ENCODE measurements at regions of chr6 and their contacts with region 1.

Region 1: DNA sequence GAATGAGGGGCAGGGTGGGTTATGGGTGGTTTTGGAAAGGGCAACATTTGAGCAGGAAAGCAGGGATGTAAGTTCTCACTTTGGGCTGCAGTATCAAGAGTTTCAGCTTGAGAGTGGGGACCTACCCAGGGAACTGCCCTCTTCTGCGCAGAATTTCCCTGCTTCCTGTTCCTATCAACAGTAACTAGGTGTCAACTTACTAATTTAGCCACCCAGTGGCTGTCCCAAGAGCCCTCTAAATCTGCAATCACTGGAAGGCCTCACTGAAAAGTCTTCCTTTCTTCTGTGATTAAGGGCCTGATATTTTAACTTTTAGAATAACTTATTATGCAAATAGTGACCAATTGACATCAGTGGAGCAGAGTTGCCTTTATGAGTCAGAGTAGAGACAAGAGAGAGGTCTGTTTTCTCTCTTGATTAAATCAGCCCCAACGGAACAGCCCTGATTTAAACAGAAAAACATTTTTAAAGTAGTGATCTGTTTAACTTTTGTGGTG is 118.2 kb upstream of the RIPOR2 start:
- DNase-seq: peak; percentile 44
- ATAC-seq: peak; percentile 41
- H3K4me3 Mint-ChIP-seq: no peak overlapping the region
- H3K27ac Mint-ChIP-seq: peak overlapping the region; percentile 66
- H3K4me1 Mint-ChIP-seq: peaks cover 77% of the 10 kb centered on the region
- H3K27me3 Mint-ChIP-seq: no peaks in the 10 kb centered on the region
- CTCF ChIP-seq: no peak

Region 2: DNA sequence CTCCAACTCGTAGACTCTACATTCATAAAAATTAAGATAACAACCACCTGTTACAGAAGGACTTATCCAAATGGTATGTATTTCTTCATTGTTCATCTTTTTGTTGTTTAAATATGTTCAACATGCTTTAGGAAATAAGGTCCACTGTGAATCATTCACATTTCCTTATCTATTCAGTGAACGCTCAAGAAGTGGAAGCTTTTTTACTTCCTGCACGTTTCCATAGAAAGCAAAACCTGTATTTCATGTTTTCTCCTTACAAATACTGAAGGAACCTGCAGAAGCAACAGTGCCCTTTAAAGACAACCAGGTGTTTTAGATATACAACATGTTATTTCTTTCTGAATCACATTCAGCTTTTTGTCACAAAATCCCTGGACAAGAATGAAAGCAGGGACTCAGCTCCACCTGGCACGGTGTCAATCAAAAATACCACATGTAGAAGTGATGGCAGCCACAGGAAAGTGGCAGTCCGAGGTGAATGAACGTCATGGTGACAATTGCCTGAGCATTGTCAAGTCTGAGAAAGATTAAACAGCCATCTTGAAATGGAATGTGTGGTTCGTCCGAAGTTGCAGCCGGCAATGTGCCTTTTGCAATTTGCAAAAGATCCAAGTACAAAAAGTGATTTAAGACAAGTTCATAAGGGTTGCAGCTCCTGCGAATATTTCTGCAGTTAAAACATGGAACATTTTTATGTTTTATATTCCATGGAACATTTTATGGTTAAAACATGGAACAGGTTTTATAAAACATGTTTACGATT is 51.4 kb before region 1 on chr6:
- CTCF ChIA-PET with region 1: no interaction called
- POLR2A ChIA-PET with region 1: no interaction called
- intact Hi-C with region 1: no loop called
- DNase-seq: no peak
- ATAC-seq: no peak
- H3K4me3 Mint-ChIP-seq: no peak overlapping the region
- H3K27ac Mint-ChIP-seq: no peak overlapping the region
- H3K4me1 Mint-ChIP-seq: peaks cover 66% of the 10 kb centered on the region
- H3K27me3 Mint-ChIP-seq: no peaks in the 10 kb centered on the region
- CTCF ChIP-seq: no peak

Region 3: DNA sequence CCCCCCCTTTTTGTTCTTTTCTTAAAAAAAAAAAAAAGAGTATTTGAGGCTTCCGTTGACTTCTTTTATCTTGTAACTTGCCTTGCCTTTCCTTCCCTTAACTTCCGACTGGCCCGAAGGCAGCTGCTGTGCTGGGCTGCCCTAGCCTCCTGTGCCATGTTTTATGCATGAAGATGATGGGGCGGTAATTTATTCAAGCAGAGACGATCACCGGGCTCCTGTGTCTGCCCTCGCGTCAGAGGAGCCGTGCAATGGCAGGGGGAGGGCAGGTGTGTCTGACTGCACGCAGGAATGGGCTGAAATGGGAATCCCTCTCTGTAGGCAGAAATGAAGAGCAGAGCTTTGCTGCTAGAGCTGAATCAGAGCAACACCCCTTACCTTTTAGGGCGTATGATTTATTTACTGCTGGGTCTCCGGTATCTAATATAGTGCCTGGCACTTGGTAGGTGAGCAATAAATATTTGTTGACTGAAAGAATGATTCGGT is 11.8 kb before region 1 on chr6:
- CTCF ChIA-PET with region 1: interaction called, 10 read pairs
- POLR2A ChIA-PET with region 1: interaction called, 7 read pairs
- intact Hi-C with region 1: no loop called
- DNase-seq: peak; percentile 64
- ATAC-seq: peak; percentile 64
- H3K4me3 Mint-ChIP-seq: peak overlapping the region; percentile 83
- H3K27ac Mint-ChIP-seq: peak overlapping the region; percentile 92
- H3K4me1 Mint-ChIP-seq: peaks cover 52% of the 10 kb centered on the region
- H3K27me3 Mint-ChIP-seq: no peaks in the 10 kb centered on the region
- CTCF ChIP-seq: no peak

Measured in activated CD8-positive, alpha-beta T cell treated with anti-CD3 and anti-CD28 coated beads for 36 hours (primary cell).